ENCODE measurements at regions of chr11 and their contacts with region 1.

Region 1: GRCh38 chr11:69841859-69842698 is 22.9 kb upstream of the FGF3 start:
- DNase-seq: peak in 1 of 2 experiments; percentile 63
- H3K4me3 ChIP-seq: no peak overlapping the region
- H3K27ac ChIP-seq: no peak overlapping the region
- H3K4me1 ChIP-seq: peaks cover 0 to 11% (median 2%) of the 10 kb centered on the region in 4 experiments; a peak in 4 of 7 replicates
- H3K27me3 ChIP-seq: peaks cover 0 to 2% (median 0%) of the 10 kb centered on the region in 4 experiments; a peak in 2 of 7 replicates
- CTCF ChIP-seq: peak; percentile 69 to 84 (median 79)
- EP300 ChIP-seq: no peak
- POLR2A ChIP-seq: no peak
- RAD21 ChIP-seq: peak; percentile 47 to 63

Region 2: DNA sequence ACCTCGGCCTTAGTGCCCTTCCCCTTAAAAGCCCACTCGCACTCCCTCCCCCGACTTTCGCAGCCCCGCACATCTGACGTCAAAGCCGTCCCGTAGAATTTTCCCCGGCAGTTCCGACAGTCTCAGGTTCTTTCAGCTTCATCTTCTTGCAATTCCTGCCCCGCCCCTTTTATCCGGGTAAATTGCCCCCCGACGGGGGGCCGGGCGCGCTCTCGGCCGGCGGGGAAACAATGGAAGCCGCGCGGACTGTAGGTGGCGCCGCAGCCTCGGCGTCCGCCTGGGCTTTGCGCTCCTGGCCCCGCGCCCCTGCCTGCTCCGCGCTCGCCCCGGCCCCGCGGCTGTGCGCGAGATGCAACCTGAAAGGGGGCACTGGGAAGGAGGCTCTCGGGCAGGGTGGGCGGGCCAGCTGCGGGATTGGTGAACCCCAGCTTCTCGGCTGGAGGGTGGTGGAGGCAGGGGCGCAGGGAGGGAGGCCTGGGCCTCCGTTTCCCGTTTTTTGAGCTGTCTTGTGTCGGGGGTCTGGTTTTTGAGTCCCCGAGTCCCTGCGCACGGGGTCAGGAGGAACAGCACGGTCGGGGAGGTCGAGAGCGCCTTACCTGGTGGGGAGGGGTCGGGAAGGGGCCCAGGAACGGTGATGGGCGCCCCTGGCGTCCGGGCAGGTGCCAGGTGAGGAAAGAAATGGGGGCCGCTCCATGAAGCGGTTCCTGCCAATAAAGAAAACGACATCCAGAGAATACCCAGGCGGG is 137.4 kb before region 1 on chr11:
- CTCF ChIA-PET with region 1: interaction called, 13 read pairs
- POLR2A ChIA-PET with region 1: interaction called, 3 read pairs
- DNase-seq: peak in 1 of 2 experiments; percentile 96
- H3K4me3 ChIP-seq: peak overlapping the region; percentile 37 to 78 (median 62)
- H3K27ac ChIP-seq: 0 out of 2 replicates have a peak overlapping the region, but pooled peaks have one; percentile 44
- H3K4me1 ChIP-seq: peaks cover 11 to 36% (median 24%) of the 10 kb centered on the region in 4 experiments
- H3K27me3 ChIP-seq: peaks cover 0 to 26% (median 17%) of the 10 kb centered on the region in 4 experiments; a peak in 5 of 7 replicates
- CTCF ChIP-seq: peak; percentile 63 to 76 (median 75)
- EP300 ChIP-seq: no peak
- POLR2A ChIP-seq: no peak
- RAD21 ChIP-seq: peak; percentile 70 to 82

Region 3: GRCh38 chr11:69828276-69828970 is 13.7 kb before region 1 on chr11:
- CTCF ChIA-PET with region 1: interaction called, 10 read pairs
- POLR2A ChIA-PET with region 1: interaction called, 4 read pairs
- DNase-seq: no peak
- H3K4me3 ChIP-seq: no peak overlapping the region
- H3K27ac ChIP-seq: no peak overlapping the region
- H3K4me1 ChIP-seq: peaks cover 0 to 15% (median 4%) of the 10 kb centered on the region in 4 experiments; a peak in 6 of 7 replicates
- H3K27me3 ChIP-seq: peaks cover 0 to 4% (median 0%) of the 10 kb centered on the region in 4 experiments; a peak in 1 of 7 replicates
- CTCF ChIP-seq: no peak
- EP300 ChIP-seq: no peak
- POLR2A ChIP-seq: no peak
- RAD21 ChIP-seq: no peak

Region 4: GRCh38 chr11:69867738-69868493 is 25.8 kb after region 1 on chr11:
- CTCF ChIA-PET with region 1: interaction called, 10 read pairs
- POLR2A ChIA-PET with region 1: no interaction called
- DNase-seq: no peak
- H3K4me3 ChIP-seq: no peak overlapping the region
- H3K27ac ChIP-seq: no peak overlapping the region
- H3K4me1 ChIP-seq: peaks cover 0 to 18% (median 9%) of the 10 kb centered on the region in 4 experiments; a peak in 5 of 7 replicates
- H3K27me3 ChIP-seq: peaks cover 0 to 3% (median 1%) of the 10 kb centered on the region in 4 experiments; a peak in 2 of 7 replicates
- CTCF ChIP-seq: no peak
- EP300 ChIP-seq: no peak
- POLR2A ChIP-seq: no peak
- RAD21 ChIP-seq: no peak